BJ (cell line): ENCODE measurements at regions of chr7 and their contacts with region 1.

Region 1: GRCh38 chr7:140003913-140004382 is 58.8 kb downstream of the PARP12 start:
- DNase-seq: no peak
- H3K4me3 ChIP-seq: no peak overlapping the region
- H3K27me3 ChIP-seq: no peaks in the 10 kb centered on the region; the same call in 1 of the 2 replicates
- CTCF ChIP-seq: peak; percentile 60

Region 2: DNA sequence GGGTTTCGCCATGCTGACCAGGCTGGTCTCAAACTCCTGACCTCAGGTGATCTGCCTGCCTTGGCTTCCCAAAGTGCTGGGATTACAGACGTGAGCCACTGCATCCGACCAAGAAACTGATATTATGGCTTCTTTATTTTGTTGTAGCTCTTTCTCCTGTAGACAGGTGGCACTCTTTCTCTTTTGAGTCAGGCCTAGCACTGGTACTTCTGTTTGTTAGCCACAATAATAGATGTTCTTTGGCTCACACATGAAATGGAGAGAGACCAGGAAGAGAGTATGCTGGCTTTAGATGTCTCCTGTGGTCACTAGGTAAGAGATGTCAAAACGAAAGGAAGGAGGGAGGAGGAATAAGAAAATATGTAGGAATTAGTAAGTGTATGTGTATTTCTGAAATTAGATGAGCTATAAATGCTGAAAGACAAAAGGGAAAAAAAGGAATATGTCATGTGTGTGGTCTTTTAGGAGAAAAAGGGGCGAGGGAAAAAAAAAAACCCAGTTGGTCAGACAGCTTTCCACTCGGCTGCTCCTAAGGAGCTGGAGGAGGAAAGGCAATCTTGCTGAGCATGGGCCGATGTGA is 401.7 kb before region 1 on chr7:
- CTCF ChIA-PET with region 1: interaction called, 25 read pairs
- POLR2A ChIA-PET with region 1: no interaction called
- DNase-seq: no peak
- H3K4me3 ChIP-seq: no peak overlapping the region
- H3K27me3 ChIP-seq: no peaks in the 10 kb centered on the region
- CTCF ChIP-seq: peak; percentile 60

Region 3: DNA sequence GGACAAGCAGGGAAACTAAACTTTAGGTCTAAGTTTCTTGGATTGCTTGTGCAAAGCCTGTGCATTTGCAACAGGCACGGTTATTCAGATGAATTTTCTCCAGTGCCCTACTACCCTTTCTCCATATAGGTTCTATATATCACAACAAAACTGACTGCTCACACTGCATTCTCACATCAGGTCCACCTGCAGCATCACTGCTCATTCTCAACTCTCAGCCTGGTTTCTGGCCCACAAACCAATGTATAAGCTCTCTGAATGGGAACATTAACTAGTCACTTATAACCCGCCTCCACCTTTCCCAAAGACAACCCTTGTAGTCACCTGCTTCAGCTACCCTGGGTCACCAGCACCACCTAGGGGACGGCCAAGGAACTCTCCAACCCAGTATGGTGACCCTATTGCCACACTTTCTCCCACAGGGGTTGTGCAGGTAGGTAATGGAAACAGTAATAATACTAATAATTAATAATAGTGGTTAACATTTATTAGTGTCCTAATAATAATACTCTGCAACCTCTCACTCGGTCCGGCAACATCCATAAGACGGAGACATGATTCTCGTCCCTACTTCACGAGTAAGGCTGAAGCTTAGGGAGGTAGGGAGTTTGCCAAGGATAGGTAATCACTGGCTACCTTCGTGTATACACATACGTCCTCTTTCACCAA is 383.1 kb before region 1 on chr7:
- CTCF ChIA-PET with region 1: interaction called, 132 read pairs
- POLR2A ChIA-PET with region 1: no interaction called
- DNase-seq: no peak
- H3K4me3 ChIP-seq: no peak overlapping the region
- H3K27me3 ChIP-seq: no peaks in the 10 kb centered on the region
- CTCF ChIP-seq: peak; percentile 70

Region 4: GRCh38 chr7:139645572-139646523 is 358.1 kb before region 1 on chr7:
- CTCF ChIA-PET with region 1: interaction called, 107 read pairs
- POLR2A ChIA-PET with region 1: no interaction called
- DNase-seq: peak; percentile 8
- H3K4me3 ChIP-seq: no peak overlapping the region
- H3K27me3 ChIP-seq: no peaks in the 10 kb centered on the region
- CTCF ChIP-seq: peak; percentile 87

Region 5: GRCh38 chr7:139767561-139767982 is 236.4 kb before region 1 on chr7:
- CTCF ChIA-PET with region 1: interaction called, 10 read pairs
- POLR2A ChIA-PET with region 1: no interaction called
- DNase-seq: no peak
- H3K4me3 ChIP-seq: no peak overlapping the region
- H3K27me3 ChIP-seq: no peaks in the 10 kb centered on the region
- CTCF ChIP-seq: no peak

Region 6: DNA sequence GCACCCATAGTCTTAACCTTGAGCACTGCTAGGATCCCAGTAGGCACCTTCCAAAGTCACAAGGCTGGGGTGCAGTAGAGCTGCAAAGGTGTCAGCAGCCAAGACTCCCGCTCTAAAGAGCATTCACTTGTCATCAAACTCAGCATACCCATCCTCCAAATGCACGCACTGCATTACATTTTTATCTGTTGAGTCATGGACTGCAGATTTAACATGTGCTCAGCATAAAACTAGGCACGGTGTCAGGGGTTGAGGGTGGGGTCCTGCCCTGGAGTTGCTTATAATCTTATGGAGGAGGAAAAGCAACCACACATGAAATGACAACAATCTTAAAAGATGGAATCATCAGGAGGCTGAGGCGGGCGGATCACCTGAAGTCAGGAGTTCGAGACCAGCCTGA is 43.8 kb before region 1 on chr7:
- CTCF ChIA-PET with region 1: no interaction called
- POLR2A ChIA-PET with region 1: no interaction called
- DNase-seq: no peak
- H3K4me3 ChIP-seq: no peak overlapping the region
- H3K27me3 ChIP-seq: 0 out of 2 replicates have a peak, but pooled peaks cover 5% of the 10 kb centered on the region
- CTCF ChIP-seq: no peak

Region 7: GRCh38 chr7:140069298-140069949 is 65.5 kb after region 1 on chr7:
- CTCF ChIA-PET with region 1: no interaction called
- POLR2A ChIA-PET with region 1: no interaction called
- DNase-seq: no peak
- H3K4me3 ChIP-seq: no peak overlapping the region
- H3K27me3 ChIP-seq: 0 out of 2 replicates have a peak, but pooled peaks cover 1% of the 10 kb centered on the region
- CTCF ChIP-seq: no peak